Activated CD4-positive, alpha-beta T cell treated with anti-CD3 and anti-CD28 coated beads for 36 hours (primary cell): ENCODE measurements at regions of chr6 and their contacts with region 1.

Region 1: GRCh38 chr6:137866914-137867684 is at the start of gene TNFAIP3:
- DNase-seq: peak; percentile 96
- ATAC-seq: peak; percentile 65
- H3K4me3 Mint-ChIP-seq: peak within 1 kb of the TSS; percentile 91
- H3K27ac Mint-ChIP-seq: peak within 1 kb of the TSS; percentile 99
- H3K4me1 Mint-ChIP-seq: peaks cover 32% of the 10 kb centered on the region
- H3K27me3 Mint-ChIP-seq: no peaks in the 10 kb centered on the region
- total RNA-seq, gene TNFAIP3: 284 to 371 TPM

Region 2: GRCh38 chr6:136771306-136771705 is 1095.8 kb before region 1 on chr6:
- CTCF ChIA-PET with region 1: no interaction called
- POLR2A ChIA-PET with region 1: interaction called, 14 read pairs
- intact Hi-C with region 1: no loop called
- DNase-seq: no peak
- ATAC-seq: no peak
- H3K4me3 Mint-ChIP-seq: no peak overlapping the region
- H3K27ac Mint-ChIP-seq: no peak overlapping the region
- H3K4me1 Mint-ChIP-seq: peaks cover 59% of the 10 kb centered on the region
- H3K27me3 Mint-ChIP-seq: no peaks in the 10 kb centered on the region

Region 3: GRCh38 chr6:137707590-137708360 is 159.3 kb before region 1 on chr6:
- CTCF ChIA-PET with region 1: interaction called, 88 read pairs
- POLR2A ChIA-PET with region 1: interaction called, 12 read pairs
- intact Hi-C with region 1: loop called (anchors 1 kb)
- DNase-seq: peak; percentile 89
- ATAC-seq: peak; percentile 64
- H3K4me3 Mint-ChIP-seq: peak overlapping the region; percentile 62
- H3K27ac Mint-ChIP-seq: peak overlapping the region; percentile 94
- H3K4me1 Mint-ChIP-seq: peaks cover 77% of the 10 kb centered on the region
- H3K27me3 Mint-ChIP-seq: no peaks in the 10 kb centered on the region

Region 4: DNA sequence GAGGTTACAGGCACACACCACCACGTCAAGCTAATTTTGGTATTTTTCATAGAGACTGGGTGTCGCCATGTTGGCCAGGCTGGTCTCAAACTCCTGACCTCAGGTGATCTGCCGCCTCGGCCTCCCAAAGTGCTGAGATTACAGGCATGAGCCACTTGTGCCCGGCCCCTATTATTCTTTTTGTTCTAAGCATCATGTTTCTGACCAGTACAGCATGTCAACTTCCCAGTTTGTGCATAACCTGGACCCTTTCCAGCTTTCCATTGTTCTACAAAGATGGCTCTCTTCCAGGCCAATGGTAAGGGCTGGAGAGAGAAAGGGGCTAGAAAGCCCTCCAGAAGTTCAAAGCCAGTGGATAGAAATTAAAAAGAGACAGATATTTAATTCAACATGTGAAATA is 91.4 kb before region 1 on chr6:
- CTCF ChIA-PET with region 1: no interaction called
- POLR2A ChIA-PET with region 1: no interaction called
- intact Hi-C with region 1: no loop called
- DNase-seq: no peak
- ATAC-seq: no peak
- H3K4me3 Mint-ChIP-seq: no peak overlapping the region
- H3K27ac Mint-ChIP-seq: no peak overlapping the region
- H3K4me1 Mint-ChIP-seq: no peaks in the 10 kb centered on the region
- H3K27me3 Mint-ChIP-seq: no peaks in the 10 kb centered on the region

Region 5: GRCh38 chr6:137811121-137811915 is 55.8 kb before region 1 on chr6:
- CTCF ChIA-PET with region 1: interaction called, 15 read pairs
- POLR2A ChIA-PET with region 1: interaction called, 3 read pairs
- intact Hi-C with region 1: loop called (anchors 1 kb)
- DNase-seq: peak; percentile 91
- ATAC-seq: peak; percentile 93
- H3K4me3 Mint-ChIP-seq: peak overlapping the region; percentile 55
- H3K27ac Mint-ChIP-seq: peak overlapping the region; percentile 83
- H3K4me1 Mint-ChIP-seq: peaks cover 79% of the 10 kb centered on the region
- H3K27me3 Mint-ChIP-seq: no peaks in the 10 kb centered on the region

Region 6: GRCh38 chr6:137849181-137849980 is 17.7 kb before region 1 on chr6:
- CTCF ChIA-PET with region 1: interaction called, 7 read pairs
- POLR2A ChIA-PET with region 1: interaction called, 3 read pairs
- intact Hi-C with region 1: loop called (anchors 1 kb)
- DNase-seq: peak; percentile 70
- ATAC-seq: peak; percentile 91
- H3K4me3 Mint-ChIP-seq: no peak overlapping the region
- H3K27ac Mint-ChIP-seq: peak overlapping the region; percentile 17
- H3K4me1 Mint-ChIP-seq: peaks cover 41% of the 10 kb centered on the region
- H3K27me3 Mint-ChIP-seq: no peaks in the 10 kb centered on the region

Region 7: DNA sequence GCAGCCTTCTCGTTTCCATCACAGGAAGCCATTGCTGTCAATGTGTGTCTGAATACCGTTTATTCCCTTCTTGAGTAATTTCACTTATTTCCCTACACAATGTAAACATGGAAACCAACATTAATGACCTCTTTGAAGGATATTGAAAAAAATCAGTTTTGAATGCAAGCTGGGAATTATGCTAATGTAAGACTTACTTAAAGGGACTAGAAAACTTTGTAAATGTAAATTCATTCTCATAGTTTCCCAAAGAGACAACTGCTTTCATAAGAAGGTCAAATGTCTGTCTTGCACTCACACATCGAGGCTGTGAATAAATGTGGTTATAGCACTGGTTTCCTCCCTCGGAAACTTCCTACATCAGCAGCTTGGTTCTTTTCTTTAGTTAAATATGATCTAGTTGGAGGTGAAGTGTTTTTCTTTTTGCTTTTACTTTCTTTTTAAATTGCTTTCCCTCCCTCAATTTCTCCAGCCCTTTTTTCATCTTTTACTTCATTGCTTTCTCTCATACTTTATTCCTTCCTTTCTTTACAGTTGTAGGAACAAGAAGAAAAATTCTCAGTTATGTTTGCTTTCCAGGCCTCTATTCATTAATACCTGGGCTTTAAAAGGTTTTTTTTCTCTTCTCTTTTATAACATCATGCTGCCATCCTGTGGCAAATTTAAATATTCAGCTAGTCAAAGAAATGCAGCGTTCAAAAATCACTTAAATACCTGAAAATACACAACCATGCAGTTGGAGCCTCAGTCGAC is 108.3 kb after region 1 on chr6:
- CTCF ChIA-PET with region 1: interaction called, 40 read pairs
- POLR2A ChIA-PET with region 1: interaction called, 10 read pairs
- intact Hi-C with region 1: loop called in 1 of 2 experiments (anchors 1 kb)
- DNase-seq: peak; percentile 51
- ATAC-seq: peak; percentile 60
- H3K4me3 Mint-ChIP-seq: peak overlapping the region; percentile 55
- H3K27ac Mint-ChIP-seq: peak overlapping the region; percentile 90
- H3K4me1 Mint-ChIP-seq: peaks cover 72% of the 10 kb centered on the region
- H3K27me3 Mint-ChIP-seq: no peaks in the 10 kb centered on the region

Region 8: GRCh38 chr6:139194795-139195194 is 1327.7 kb after region 1 on chr6:
- CTCF ChIA-PET with region 1: no interaction called
- POLR2A ChIA-PET with region 1: no interaction called
- intact Hi-C with region 1: no loop called
- DNase-seq: no peak
- ATAC-seq: no peak
- H3K4me3 Mint-ChIP-seq: no peak overlapping the region
- H3K27ac Mint-ChIP-seq: no peak overlapping the region
- H3K4me1 Mint-ChIP-seq: no peaks in the 10 kb centered on the region
- H3K27me3 Mint-ChIP-seq: no peaks in the 10 kb centered on the region